ENCODE measurements at regions of chr16 and their contacts with region 1.

Region 1: GRCh38 chr16:85245307-85246172 is 133.3 kb upstream of the CIBAR2 start:
- DNase-seq: no peak
- ATAC-seq: peak; percentile 85
- H3K4me3 ChIP-seq: no peak overlapping the region
- H3K27ac ChIP-seq: no peak overlapping the region
- H3K4me1 ChIP-seq: no peaks in the 10 kb centered on the region
- H3K27me3 ChIP-seq: no peaks in the 10 kb centered on the region
- CTCF ChIP-seq: peak; percentile 87 to 93 (median 90)
- EP300 ChIP-seq: no peak
- POLR2A ChIP-seq: no peak
- RAD21 ChIP-seq: peak; percentile 71

Region 2: DNA sequence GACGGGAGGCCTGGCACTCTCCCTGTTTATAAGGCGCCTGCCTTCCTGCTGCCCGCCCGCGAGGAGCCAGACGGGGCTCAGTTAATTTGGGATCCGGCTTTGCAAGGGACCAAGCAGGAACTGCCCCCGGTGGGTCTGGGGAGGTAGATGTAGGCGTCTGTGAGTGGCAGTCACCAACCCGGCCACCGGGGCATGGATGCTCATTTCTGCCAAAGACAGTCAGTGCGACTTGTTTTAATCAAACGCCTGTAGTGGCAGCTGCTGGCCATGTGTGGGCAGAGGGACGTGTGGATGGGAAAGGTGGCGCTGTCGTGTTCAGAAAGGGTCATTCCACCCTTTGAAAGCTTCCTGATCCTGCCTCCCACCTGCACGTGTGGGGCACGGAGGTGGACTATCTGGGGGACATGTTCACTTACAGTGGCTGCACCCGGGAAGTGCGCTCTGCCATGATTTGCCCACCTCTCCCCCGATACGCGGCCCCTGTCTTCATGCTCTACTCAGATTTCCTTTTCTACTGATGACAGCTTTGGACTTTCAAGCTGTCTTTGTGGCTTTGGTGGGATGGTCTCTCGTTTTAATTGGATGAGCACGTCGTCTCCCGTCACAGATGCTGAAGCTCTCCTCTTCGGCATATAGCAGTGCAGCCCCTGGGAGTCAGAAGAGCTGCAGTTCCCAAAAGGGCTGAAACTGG is 72.9 kb before region 1 on chr16:
- CTCF ChIA-PET with region 1: interaction called, 12 read pairs
- POLR2A ChIA-PET with region 1: no interaction called
- RAD21 ChIA-PET with region 1: no interaction called
- SMC1A ChIA-PET with region 1: no interaction called
- in situ Hi-C with region 1: no loop called
- intact Hi-C with region 1: no loop called
- DNase-seq: no peak
- ATAC-seq: peak; percentile 77
- H3K4me3 ChIP-seq: no peak overlapping the region
- H3K27ac ChIP-seq: no peak overlapping the region
- H3K4me1 ChIP-seq: no peaks in the 10 kb centered on the region; the same call in 1 of the 2 replicates
- H3K27me3 ChIP-seq: peaks cover 2 to 7% of the 10 kb centered on the region in 2 experiments; a peak in 3 of 4 replicates
- CTCF ChIP-seq: peak in 2 of 3 experiments; percentile 46 to 52; a peak in 4 of 6 replicates
- EP300 ChIP-seq: no peak
- POLR2A ChIP-seq: no peak
- RAD21 ChIP-seq: peak; percentile 24; the same call in 1 of the 2 replicates

Region 3: GRCh38 chr16:85234310-85235204 is 11.0 kb before region 1 on chr16:
- CTCF ChIA-PET with region 1: interaction called, 17 read pairs
- POLR2A ChIA-PET with region 1: no interaction called
- RAD21 ChIA-PET with region 1: interaction called, 8 read pairs
- SMC1A ChIA-PET with region 1: interaction called, 6 read pairs
- in situ Hi-C with region 1: no loop called
- intact Hi-C with region 1: no loop called
- DNase-seq: no peak
- ATAC-seq: no peak
- H3K4me3 ChIP-seq: no peak overlapping the region
- H3K27ac ChIP-seq: no peak overlapping the region
- H3K4me1 ChIP-seq: peaks cover 11% of the 10 kb centered on the region
- H3K27me3 ChIP-seq: no peaks in the 10 kb centered on the region
- CTCF ChIP-seq: no peak
- EP300 ChIP-seq: no peak
- POLR2A ChIP-seq: no peak
- RAD21 ChIP-seq: no peak

Region 4: DNA sequence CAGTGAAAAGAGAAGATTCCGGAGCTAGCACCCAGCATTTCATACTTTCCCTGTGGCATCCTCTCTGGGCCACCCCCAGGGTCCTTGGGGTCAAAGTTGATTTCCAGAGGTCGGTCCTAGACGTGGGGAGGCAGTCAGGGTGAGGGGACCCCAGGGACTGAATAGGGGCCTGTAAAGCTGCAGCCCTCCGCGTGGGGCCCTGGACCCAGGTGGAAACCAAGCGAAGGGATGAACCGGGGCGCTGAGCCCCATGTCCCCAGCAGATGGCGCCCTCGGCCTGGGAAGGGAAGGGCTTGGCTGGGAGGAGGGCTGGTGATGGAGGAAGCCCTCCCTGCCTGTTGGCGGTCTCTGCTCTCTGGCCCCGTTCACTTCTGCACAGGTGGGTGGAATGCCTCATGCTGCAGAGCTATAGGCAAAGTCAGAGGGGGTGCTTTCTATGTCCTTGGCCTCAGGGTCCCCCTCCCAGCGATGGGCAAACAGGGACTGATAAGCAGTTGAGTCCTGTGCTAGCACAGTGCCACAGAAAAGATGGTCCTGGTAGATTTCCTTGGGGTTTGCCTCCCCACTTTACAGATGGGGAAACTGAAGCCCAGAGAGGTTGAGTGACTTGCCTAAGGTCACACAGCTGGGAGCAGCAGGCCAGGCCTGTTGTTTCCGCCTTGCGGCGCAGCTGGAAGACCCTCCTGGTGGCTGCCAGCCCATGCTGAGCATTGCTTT is 30.2 kb after region 1 on chr16:
- CTCF ChIA-PET with region 1: interaction called, 16 read pairs
- POLR2A ChIA-PET with region 1: no interaction called
- RAD21 ChIA-PET with region 1: no interaction called
- SMC1A ChIA-PET with region 1: no interaction called
- in situ Hi-C with region 1: no loop called
- intact Hi-C with region 1: no loop called
- DNase-seq: no peak
- ATAC-seq: peak; percentile 97
- H3K4me3 ChIP-seq: no peak overlapping the region
- H3K27ac ChIP-seq: no peak overlapping the region
- H3K4me1 ChIP-seq: no peaks in the 10 kb centered on the region
- H3K27me3 ChIP-seq: peaks cover 0 to 3% of the 10 kb centered on the region in 2 experiments; a peak in 1 of 4 replicates
- CTCF ChIP-seq: peak; percentile 87 to 97 (median 92)
- EP300 ChIP-seq: no peak
- POLR2A ChIP-seq: no peak
- RAD21 ChIP-seq: peak; percentile 85